Natural killer cell (primary cell): ENCODE measurements at regions of chr6 and their contacts with region 1.

Region 1: DNA sequence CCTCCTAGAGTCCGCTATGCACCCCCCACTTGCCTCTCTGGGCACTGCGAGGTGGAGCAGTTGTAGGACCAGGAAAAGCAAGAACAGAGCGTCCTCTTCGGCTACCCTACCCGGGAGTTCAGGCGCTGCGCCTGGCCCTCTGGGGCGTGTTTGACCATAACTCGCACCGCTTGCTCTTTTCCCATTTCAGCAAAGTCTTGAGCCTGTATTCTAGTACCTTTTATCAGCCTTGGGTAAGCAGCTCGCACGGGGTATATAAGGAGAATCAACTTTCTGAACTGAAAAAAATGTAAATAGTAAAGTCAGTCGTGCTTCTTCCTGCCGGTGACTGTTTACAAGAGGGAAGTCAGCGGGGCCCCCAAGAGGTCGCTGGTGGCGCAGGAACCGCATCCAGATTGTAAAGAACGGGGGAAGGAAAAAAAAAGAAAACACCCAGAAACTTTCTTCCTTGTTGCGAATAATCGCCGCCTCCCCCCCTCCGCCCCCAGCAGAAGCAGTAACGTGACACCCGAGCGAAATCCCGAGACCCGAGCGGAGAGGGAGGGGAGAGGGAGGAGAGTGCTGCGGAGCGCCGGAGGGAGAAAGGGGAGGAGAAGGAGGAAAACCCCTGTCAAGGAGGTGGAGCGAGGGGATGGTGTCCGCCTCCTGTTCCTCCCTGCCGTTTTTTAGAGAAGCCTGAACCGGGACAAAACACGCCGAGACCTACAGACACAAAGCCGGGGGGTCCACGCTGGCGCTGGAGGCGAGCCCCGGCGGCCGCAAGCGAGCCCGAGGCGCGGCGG is at the start of gene UST:
- DNase-seq: peak; percentile 62 to 86
- ATAC-seq: peak; percentile 62 to 73 (median 70)
- H3K4me3 ChIP-seq: peak within 1 kb of the TSS; percentile 77
- H3K4me3 Mint-ChIP-seq: peak within 1 kb of the TSS; percentile 99
- H3K27ac ChIP-seq: peak within 1 kb of the TSS; percentile 80
- H3K27ac Mint-ChIP-seq: peak within 1 kb of the TSS; percentile 84 to 95
- H3K4me1 ChIP-seq: peaks cover 20% of the 10 kb centered on the region
- H3K4me1 Mint-ChIP-seq: peaks cover 40 to 46% of the 10 kb centered on the region in 2 donors
- H3K27me3 ChIP-seq: no peaks in the 10 kb centered on the region
- H3K27me3 Mint-ChIP-seq: peaks cover 0 to 8% of the 10 kb centered on the region in 2 donors
- CTCF ChIP-seq: peak; percentile 60
- total RNA-seq, gene UST: 6.3 to 11.9 (median 10.6) TPM

Region 2: GRCh38 chr6:148559848-148560433 is 186.6 kb before region 1 on chr6:
- intact Hi-C with region 1: loop called (anchors 1 kb)
- DNase-seq: peak; percentile 71 to 83
- ATAC-seq: peak; percentile 87 to 93 (median 92)
- H3K4me3 ChIP-seq: no peak overlapping the region
- H3K4me3 Mint-ChIP-seq: no peak overlapping the region
- H3K27ac ChIP-seq: no peak overlapping the region
- H3K27ac Mint-ChIP-seq: no peak overlapping the region
- H3K4me1 ChIP-seq: peaks cover 25% of the 10 kb centered on the region
- H3K4me1 Mint-ChIP-seq: peaks cover 9 to 15% of the 10 kb centered on the region in 2 donors
- H3K27me3 ChIP-seq: peaks cover 30% of the 10 kb centered on the region
- H3K27me3 Mint-ChIP-seq: peaks cover 41 to 78% of the 10 kb centered on the region in 2 donors
- CTCF ChIP-seq: peak; percentile 98

Region 3: GRCh38 chr6:148570451-148570850 is 176.1 kb before region 1 on chr6:
- intact Hi-C with region 1: no loop called
- DNase-seq: no peak
- ATAC-seq: no peak
- H3K4me3 ChIP-seq: no peak overlapping the region
- H3K4me3 Mint-ChIP-seq: no peak overlapping the region
- H3K27ac ChIP-seq: no peak overlapping the region
- H3K27ac Mint-ChIP-seq: no peak overlapping the region
- H3K4me1 ChIP-seq: peaks cover 26% of the 10 kb centered on the region
- H3K4me1 Mint-ChIP-seq: peaks cover 19 to 23% of the 10 kb centered on the region in 2 donors
- H3K27me3 ChIP-seq: peaks cover 30% of the 10 kb centered on the region
- H3K27me3 Mint-ChIP-seq: peaks cover 45 to 76% of the 10 kb centered on the region in 2 donors
- CTCF ChIP-seq: no peak

Region 4: DNA sequence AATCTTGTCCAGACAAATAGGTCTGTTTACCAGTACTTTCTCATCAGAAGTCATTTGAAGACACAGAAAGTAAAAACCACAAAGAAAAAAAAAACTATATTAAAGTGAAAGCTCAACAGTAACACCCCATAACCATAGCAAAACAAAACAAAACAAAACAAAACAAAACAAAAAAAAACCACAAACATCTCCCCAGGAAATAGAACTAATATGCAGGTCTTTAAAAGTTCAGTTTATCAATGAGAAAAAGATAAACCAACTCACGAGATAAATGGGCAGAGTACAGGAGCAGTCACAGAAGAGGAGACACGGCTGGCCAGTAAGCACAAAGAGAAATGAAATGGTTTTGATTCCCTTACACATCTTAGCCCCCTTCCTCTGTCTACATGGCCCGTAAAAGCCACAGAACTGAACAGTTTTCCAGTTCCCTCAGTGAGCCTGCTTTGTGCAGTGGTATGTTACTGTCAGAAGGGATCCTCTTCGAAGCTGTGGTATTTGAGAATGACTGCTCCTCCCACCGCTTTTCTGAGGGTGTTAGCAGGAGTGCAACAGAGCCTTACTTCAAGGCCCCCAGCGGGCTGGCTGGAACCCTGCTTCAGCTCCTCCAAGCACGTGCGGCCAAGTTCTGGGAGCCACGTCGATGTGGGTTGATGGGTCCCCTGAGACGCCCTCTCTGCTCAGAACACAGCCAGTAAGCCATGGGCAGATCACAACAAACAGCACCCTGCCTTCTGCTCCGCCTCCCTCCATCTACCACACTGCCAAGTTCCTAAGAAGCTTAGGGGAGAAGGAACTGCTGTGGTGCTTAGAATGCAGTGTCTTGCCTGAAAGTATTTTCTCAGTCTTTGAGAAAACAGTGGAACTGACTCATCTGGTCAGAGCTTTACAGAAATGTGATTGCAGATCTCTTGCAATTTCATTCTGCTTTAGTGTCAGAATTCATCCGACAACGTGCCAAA is 14.3 kb after region 1 on chr6:
- intact Hi-C with region 1: loop called (anchors 1 kb)
- DNase-seq: peak; percentile 51 to 80
- ATAC-seq: peak; percentile 45 to 69 (median 53)
- H3K4me3 ChIP-seq: peak overlapping the region; percentile 15
- H3K4me3 Mint-ChIP-seq: peak overlapping the region; percentile 89
- H3K27ac ChIP-seq: peak overlapping the region; percentile 90
- H3K27ac Mint-ChIP-seq: peak overlapping the region; percentile 94 to 96
- H3K4me1 ChIP-seq: peaks cover 42% of the 10 kb centered on the region
- H3K4me1 Mint-ChIP-seq: peaks cover 77 to 80% of the 10 kb centered on the region in 2 donors
- H3K27me3 ChIP-seq: no peaks in the 10 kb centered on the region
- H3K27me3 Mint-ChIP-seq: no peaks in the 10 kb centered on the region
- CTCF ChIP-seq: no peak

Region 5: DNA sequence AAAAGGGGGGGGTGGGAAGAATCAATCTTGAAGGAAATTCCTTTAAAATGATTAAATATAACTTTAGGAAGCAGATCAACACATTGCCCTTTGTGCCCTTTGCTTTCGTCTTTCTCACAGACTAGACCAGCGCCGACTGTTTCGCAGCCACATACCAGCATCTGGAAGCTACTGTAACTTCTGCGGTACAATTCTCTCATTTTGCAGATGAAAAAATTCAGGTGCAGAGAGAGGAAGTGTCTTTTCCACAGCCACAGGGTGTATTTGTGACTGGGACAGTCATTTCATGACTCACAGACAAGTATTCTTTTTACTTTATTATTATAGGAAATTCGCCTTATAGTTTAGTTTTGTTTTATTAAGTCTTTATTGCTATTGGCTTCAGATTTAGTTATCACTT is 84.5 kb after region 1 on chr6:
- intact Hi-C with region 1: loop called (anchors 5 kb)
- DNase-seq: peak; percentile 19 to 67
- ATAC-seq: peak; percentile 75 to 83 (median 75)
- H3K4me3 ChIP-seq: peak overlapping the region; percentile 22
- H3K4me3 Mint-ChIP-seq: peak overlapping the region; percentile 97
- H3K27ac ChIP-seq: peak overlapping the region; percentile 15
- H3K27ac Mint-ChIP-seq: peak overlapping the region; percentile 85 to 96
- H3K4me1 ChIP-seq: peaks cover 26% of the 10 kb centered on the region
- H3K4me1 Mint-ChIP-seq: peaks cover 36 to 53% of the 10 kb centered on the region in 2 donors
- H3K27me3 ChIP-seq: no peaks in the 10 kb centered on the region
- H3K27me3 Mint-ChIP-seq: no peaks in the 10 kb centered on the region
- CTCF ChIP-seq: no peak

Region 6: GRCh38 chr6:148874698-148875293 is 128.2 kb after region 1 on chr6:
- intact Hi-C with region 1: loop called (anchors 5 kb)
- DNase-seq: no peak
- ATAC-seq: no peak
- H3K4me3 ChIP-seq: no peak overlapping the region
- H3K4me3 Mint-ChIP-seq: no peak overlapping the region
- H3K27ac ChIP-seq: no peak overlapping the region
- H3K27ac Mint-ChIP-seq: no peak overlapping the region
- H3K4me1 ChIP-seq: peaks cover 16% of the 10 kb centered on the region
- H3K4me1 Mint-ChIP-seq: peaks cover 34 to 37% of the 10 kb centered on the region in 2 donors
- H3K27me3 ChIP-seq: no peaks in the 10 kb centered on the region
- H3K27me3 Mint-ChIP-seq: no peaks in the 10 kb centered on the region
- CTCF ChIP-seq: no peak

Region 7: DNA sequence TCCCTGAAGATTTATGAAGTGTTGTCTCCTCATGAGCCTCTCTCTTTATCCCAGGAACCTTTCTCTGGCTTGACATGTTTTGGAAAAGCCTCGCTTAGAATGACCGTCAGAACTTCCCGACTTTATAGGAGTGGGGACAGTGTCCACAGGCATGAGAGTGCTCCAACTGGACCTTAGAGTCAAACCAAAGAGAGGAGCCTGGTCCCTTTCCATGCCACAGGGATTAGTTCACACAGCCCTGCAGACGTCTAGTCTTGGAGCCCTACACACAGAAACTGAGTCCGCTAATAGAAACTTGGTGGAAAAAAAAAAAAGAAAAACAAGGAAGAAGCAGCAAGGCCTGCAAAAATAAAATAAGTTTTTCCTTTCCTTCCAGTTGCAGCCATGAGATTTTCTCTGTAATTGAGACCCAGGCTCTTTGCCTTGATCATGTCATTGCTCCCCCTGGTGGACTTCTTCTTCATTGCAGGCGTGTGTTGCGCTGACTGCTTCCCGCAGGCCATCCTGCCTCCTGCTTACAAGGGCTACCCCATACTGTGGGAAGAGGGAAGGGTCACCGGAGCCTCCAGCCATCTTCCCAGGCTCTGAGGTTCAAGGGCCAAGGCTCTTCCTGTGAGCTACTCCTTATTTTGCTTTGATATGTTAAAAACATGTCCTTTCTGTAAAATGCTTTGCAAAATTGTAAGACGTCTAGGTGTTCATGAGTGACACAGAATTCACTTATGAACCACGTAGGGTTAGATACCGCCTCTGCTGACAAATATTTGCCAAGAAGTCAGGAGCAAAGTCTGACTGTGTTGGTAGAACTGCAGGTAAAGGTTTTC is 201.3 kb after region 1 on chr6:
- intact Hi-C with region 1: loop called (anchors 1 kb)
- DNase-seq: peak; percentile 74 to 90
- ATAC-seq: peak; percentile 86 to 99 (median 98)
- H3K4me3 ChIP-seq: no peak overlapping the region
- H3K4me3 Mint-ChIP-seq: no peak overlapping the region
- H3K27ac ChIP-seq: no peak overlapping the region
- H3K27ac Mint-ChIP-seq: no peak overlapping the region
- H3K4me1 ChIP-seq: no peaks in the 10 kb centered on the region
- H3K4me1 Mint-ChIP-seq: peaks cover 0 to 6% of the 10 kb centered on the region in 2 donors
- H3K27me3 ChIP-seq: no peaks in the 10 kb centered on the region
- H3K27me3 Mint-ChIP-seq: peaks cover 0 to 4% of the 10 kb centered on the region in 2 donors
- CTCF ChIP-seq: peak; percentile 88

Region 8: GRCh38 chr6:149316798-149317655 is 570.5 kb after region 1 on chr6:
- intact Hi-C with region 1: loop called (anchors 5 kb)
- DNase-seq: peak; percentile 83 to 94
- ATAC-seq: peak; percentile 78 to 91 (median 87)
- H3K4me3 ChIP-seq: peak overlapping the region; percentile 71
- H3K4me3 Mint-ChIP-seq: peak overlapping the region; percentile 87
- H3K27ac ChIP-seq: peak overlapping the region; percentile 84
- H3K27ac Mint-ChIP-seq: peak overlapping the region; percentile 75 to 92
- H3K4me1 ChIP-seq: peaks cover 9% of the 10 kb centered on the region
- H3K4me1 Mint-ChIP-seq: peaks cover 24 to 29% of the 10 kb centered on the region in 2 donors
- H3K27me3 ChIP-seq: no peaks in the 10 kb centered on the region
- H3K27me3 Mint-ChIP-seq: peaks cover 0 to 4% of the 10 kb centered on the region in 2 donors
- CTCF ChIP-seq: no peak